Activated naive CD4-positive, alpha-beta T cell treated with anti-CD3 and anti-CD28 coated beads for 36 hours (primary cell): ENCODE measurements at regions of chr3 and their contacts with region 1.

Region 1: DNA sequence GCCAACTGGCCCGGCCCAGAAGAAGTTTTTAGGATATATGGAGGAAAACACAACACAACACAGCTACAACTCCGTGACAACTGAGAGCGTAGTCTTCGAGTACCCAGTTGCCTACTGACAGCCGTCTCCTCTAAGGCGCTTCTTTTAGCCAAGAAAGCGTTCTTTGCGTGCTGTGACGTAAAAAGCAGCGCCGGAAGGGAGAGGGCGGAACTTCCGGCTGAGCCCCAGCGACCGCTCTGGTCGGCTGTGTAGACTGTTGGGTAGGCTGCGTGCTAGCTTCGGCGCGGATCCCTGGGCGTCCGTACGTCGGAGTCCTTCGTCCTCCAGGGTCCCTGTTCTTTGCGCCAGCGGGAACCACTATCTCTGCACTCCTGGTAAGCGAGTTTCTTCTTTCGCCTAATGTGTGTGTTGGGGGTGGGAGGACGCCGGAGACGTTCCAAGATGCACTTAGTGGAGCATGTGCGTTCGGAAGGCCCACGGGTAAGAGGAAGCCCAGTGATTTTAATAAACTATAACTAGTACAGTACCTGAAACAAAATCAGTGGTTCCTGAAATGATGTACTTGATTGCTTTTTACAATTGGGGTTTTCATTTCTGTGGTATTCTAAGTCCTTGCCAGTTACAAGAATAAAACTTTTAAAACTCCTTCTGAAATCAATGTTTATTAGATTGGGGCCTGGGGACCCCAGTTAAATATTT is at the start of gene TRMT10C:
- DNase-seq: peak; percentile 96
- H3K4me3 Mint-ChIP-seq: peak within 1 kb of the TSS; percentile 97
- H3K27ac Mint-ChIP-seq: peak within 1 kb of the TSS; percentile 94
- H3K4me1 Mint-ChIP-seq: peaks cover 40% of the 10 kb centered on the region
- H3K27me3 Mint-ChIP-seq: no peaks in the 10 kb centered on the region
- total RNA-seq, gene TRMT10C: 24.0 to 24.4 TPM

Region 2: GRCh38 chr3:101061312-101061711 is 500.5 kb before region 1 on chr3:
- CTCF ChIA-PET with region 1: no interaction called
- intact Hi-C with region 1: no loop called
- DNase-seq: no peak
- H3K4me3 Mint-ChIP-seq: no peak overlapping the region
- H3K27ac Mint-ChIP-seq: no peak overlapping the region
- H3K4me1 Mint-ChIP-seq: no peaks in the 10 kb centered on the region
- H3K27me3 Mint-ChIP-seq: peaks cover 25% of the 10 kb centered on the region

Region 3: DNA sequence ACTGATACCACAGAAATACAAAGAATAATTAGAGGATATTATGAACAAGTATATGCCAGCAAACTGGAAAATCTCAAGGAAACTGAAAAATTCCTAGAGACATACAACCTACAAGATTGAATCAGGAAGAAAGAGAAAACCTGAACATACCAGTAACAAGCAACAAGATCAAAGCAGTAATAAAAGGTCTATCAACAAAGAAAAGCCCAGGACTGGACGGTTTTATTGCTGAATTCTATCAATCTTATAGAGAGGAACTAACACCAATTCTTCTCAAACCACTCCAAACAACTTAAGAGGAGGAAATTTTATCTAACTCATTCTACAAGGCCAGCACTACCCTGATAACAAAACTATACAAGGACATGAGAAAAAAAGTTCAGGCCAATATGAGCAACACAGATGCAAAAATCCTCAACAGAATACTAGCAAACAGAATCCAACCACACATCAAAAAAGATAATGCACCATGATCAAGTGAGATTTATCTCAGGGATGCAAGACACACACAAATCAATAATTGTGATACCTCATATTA is 170.3 kb before region 1 on chr3:
- CTCF ChIA-PET with region 1: no interaction called
- intact Hi-C with region 1: loop called (anchors 1 kb)
- DNase-seq: no peak
- H3K4me3 Mint-ChIP-seq: no peak overlapping the region
- H3K27ac Mint-ChIP-seq: no peak overlapping the region
- H3K4me1 Mint-ChIP-seq: peaks cover 30% of the 10 kb centered on the region
- H3K27me3 Mint-ChIP-seq: no peaks in the 10 kb centered on the region

Region 4: GRCh38 chr3:101512646-101513418 is 48.9 kb before region 1 on chr3 and contains the start of gene SENP7:
- CTCF ChIA-PET with region 1: no interaction called
- intact Hi-C with region 1: loop called (anchors 1 kb)
- DNase-seq: peak; percentile 89
- H3K4me3 Mint-ChIP-seq: peak within 1 kb of the TSS; percentile 97
- H3K27ac Mint-ChIP-seq: peak within 1 kb of the TSS; percentile 97
- H3K4me1 Mint-ChIP-seq: peaks cover 50% of the 10 kb centered on the region
- H3K27me3 Mint-ChIP-seq: no peaks in the 10 kb centered on the region
- total RNA-seq, gene SENP7: 16.1 to 16.8 TPM

Region 5: GRCh38 chr3:101544161-101544850 is 17.5 kb before region 1 on chr3:
- CTCF ChIA-PET with region 1: interaction called, 3 read pairs
- intact Hi-C with region 1: loop called (anchors 1 kb)
- DNase-seq: no peak
- H3K4me3 Mint-ChIP-seq: no peak overlapping the region
- H3K27ac Mint-ChIP-seq: no peak overlapping the region
- H3K4me1 Mint-ChIP-seq: peaks cover 29% of the 10 kb centered on the region
- H3K27me3 Mint-ChIP-seq: no peaks in the 10 kb centered on the region

Region 6: GRCh38 chr3:101676765-101677435 is 115.1 kb after region 1 on chr3 and contains the start of gene ZBTB11:
- CTCF ChIA-PET with region 1: no interaction called
- intact Hi-C with region 1: loop called (anchors 1 kb)
- DNase-seq: peak; percentile 100
- H3K4me3 Mint-ChIP-seq: peak within 1 kb of the TSS; percentile 87
- H3K27ac Mint-ChIP-seq: peak within 1 kb of the TSS; percentile 95
- H3K4me1 Mint-ChIP-seq: peaks cover 54% of the 10 kb centered on the region
- H3K27me3 Mint-ChIP-seq: no peaks in the 10 kb centered on the region
- total RNA-seq, gene ZBTB11: 31.2 to 31.7 TPM

Region 7: DNA sequence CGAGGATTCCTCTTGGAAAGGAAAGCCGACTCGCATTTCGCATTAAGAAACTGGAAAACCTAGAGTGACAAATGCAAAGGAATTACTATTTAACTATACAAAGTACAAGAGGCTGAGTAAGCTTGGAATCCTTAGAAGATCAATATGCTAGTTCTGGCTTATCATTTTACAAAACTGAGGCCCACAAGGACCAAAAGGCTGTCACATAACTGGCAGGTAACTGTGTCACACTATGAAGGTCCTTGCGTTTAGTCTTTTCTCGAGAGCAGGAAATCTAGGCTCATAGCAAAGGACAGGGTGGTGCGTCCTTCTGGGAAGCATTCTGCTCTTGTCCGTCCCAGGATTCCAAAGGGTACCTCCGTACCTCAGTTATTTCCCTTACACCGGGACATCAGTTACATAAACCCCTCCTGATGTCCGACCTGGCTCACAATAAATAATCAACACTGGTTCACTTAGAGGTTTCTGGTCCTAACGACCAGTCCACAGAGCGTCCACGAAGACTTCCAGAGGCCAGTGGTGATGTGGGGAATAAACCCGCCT is 124.2 kb after region 1 on chr3:
- CTCF ChIA-PET with region 1: no interaction called
- intact Hi-C with region 1: loop called (anchors 1 kb)
- DNase-seq: no peak
- H3K4me3 Mint-ChIP-seq: peak overlapping the region; percentile 98
- H3K27ac Mint-ChIP-seq: peak overlapping the region; percentile 99
- H3K4me1 Mint-ChIP-seq: peaks cover 54% of the 10 kb centered on the region
- H3K27me3 Mint-ChIP-seq: no peaks in the 10 kb centered on the region